Gastrocnemius medialis (tissue), 4 donors: ENCODE measurements at regions of chr18 and their contacts with region 1.

Region 1: GRCh38 chr18:12038639-12039417 is 54.8 kb upstream of the ANKRD62 start:
- DNase-seq: peak; percentile 57 to 74
- ATAC-seq: peak; percentile 85 to 87
- H3K4me3 ChIP-seq: peak overlapping the region; percentile 56 to 67 (median 60)
- H3K27ac ChIP-seq: peak overlapping the region in 2 of 4 donors; percentile 25 to 49
- H3K4me1 ChIP-seq: peaks cover 0 to 14% of the 10 kb centered on the region in 2 donors
- H3K27me3 ChIP-seq: no peaks in the 10 kb centered on the region
- CTCF ChIP-seq: peak; percentile 96 to 100 (median 97)
- POLR2A ChIP-seq: no peak

Region 2: DNA sequence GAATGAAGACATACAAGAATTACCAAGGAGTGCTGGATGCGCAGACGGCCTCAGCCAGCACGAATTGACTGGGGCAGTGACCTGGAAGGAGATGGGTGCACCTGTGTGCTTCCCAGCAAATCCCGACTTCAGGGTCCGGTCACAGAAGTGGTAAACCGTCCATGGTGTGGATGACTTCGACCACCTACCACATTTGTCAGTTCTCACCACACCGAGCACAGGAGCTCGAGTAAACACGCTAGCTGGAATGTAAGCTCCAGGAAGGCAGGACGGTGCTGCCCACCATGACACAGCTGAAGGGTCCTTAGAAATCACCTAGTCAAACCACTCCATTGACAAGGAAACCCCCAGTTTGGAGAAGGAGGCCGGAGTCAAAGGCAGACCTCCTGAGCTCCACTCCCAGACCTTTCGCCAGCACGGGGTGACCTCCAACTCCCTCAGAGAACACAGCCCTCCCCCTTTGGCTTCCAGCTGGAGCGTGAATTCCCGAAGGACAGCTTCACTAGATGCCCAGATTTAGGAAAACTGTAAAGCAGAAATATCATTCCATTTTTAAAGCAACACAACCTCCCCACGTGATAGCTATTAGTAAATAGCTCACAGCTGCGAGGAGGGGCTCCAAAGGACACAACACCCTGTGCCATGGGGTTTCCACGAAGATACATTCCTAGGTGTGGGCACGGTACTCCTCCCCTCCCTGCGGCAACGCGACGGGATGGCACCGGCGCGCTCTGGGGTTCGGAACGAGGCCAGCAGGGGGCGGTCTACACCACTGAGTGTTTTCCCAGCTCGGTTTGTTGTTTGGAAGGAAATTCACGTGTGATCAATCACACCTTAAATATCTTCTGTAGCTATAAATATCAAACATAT is 383.9 kb before region 1 on chr18:
- in situ Hi-C with region 1: no loop called
- intact Hi-C with region 1: loop called (anchors 10 kb)
- DNase-seq: peak in 1 of 2 donors; percentile 20
- ATAC-seq: no peak
- H3K4me3 ChIP-seq: peak overlapping the region in 1 of 4 donors; percentile 7
- H3K27ac ChIP-seq: no peak overlapping the region
- H3K4me1 ChIP-seq: peaks cover 0 to 4% of the 10 kb centered on the region in 2 donors
- H3K27me3 ChIP-seq: peaks cover 0 to 1% (median 0%) of the 10 kb centered on the region in 3 donors
- CTCF ChIP-seq: peak; percentile 40 to 71 (median 56)
- POLR2A ChIP-seq: no peak

Region 3: GRCh38 chr18:11733031-11733430 is 305.8 kb before region 1 on chr18:
- in situ Hi-C with region 1: loop called in 2 of 4 experiments (anchors 10 to 25 kb)
- intact Hi-C with region 1: loop called (anchors 10 kb)
- DNase-seq: peak; percentile 44 to 75
- ATAC-seq: peak; percentile 80 to 98
- H3K4me3 ChIP-seq: peak overlapping the region; percentile 0 to 48 (median 28)
- H3K27ac ChIP-seq: no peak overlapping the region
- H3K4me1 ChIP-seq: no peaks in the 10 kb centered on the region
- H3K27me3 ChIP-seq: peaks cover 0 to 5% (median 0%) of the 10 kb centered on the region in 3 donors
- CTCF ChIP-seq: peak; percentile 86 to 93 (median 90)
- POLR2A ChIP-seq: no peak

Region 4: DNA sequence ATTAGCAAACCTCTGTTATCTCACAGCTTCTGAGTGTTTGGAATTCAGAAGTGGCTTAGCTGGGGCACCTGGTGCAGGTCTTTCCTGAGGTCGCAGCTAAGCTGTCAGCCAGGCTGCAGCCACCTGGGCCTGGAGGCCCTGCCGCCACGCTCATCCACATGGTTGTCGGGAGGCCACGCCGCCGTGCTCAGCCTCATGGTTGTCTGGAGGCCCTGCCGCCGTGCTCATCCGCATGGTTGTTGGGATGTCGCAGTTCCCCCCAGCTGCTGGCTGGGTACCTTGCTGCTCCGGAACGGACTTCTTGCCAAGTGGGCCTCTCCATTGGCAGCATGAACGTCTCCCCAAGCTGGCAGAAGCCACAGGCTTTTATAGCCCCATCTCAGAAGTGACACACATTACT is 106.4 kb before region 1 on chr18:
- in situ Hi-C with region 1: loop called in 2 of 4 experiments (anchors 5 to 10 kb)
- intact Hi-C with region 1: no loop called
- DNase-seq: no peak
- ATAC-seq: no peak
- H3K4me3 ChIP-seq: no peak overlapping the region
- H3K27ac ChIP-seq: no peak overlapping the region
- H3K4me1 ChIP-seq: no peaks in the 10 kb centered on the region
- H3K27me3 ChIP-seq: no peaks in the 10 kb centered on the region
- CTCF ChIP-seq: no peak
- POLR2A ChIP-seq: no peak

Region 5: DNA sequence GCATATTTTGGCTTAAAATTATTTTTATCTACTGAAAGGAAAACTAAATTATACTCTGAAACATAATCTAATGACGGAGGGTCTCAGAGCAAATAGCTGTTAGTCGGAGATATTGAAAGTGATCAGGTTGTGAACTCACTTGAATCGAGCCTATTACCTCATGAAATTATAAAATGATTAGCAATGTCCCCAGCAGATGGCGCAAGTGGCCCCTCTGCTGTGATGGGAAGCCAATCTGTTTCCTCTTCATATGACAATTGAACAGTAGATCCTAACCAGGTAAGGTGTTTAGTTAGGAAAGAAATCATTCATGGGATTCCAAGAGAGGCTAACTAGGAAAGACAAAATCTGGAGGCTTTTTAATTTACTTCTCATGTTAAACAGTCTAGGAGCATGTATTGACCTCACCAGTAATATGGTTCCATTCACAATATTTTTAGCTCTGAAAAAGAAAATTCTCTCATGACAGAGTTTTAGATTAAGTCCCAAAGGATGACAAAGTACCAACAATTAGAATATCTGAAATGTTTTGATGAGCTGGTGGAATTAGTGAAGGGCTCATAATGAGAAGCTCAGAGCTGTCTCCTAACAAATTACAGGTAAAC is 100.9 kb before region 1 on chr18:
- in situ Hi-C with region 1: loop called in 2 of 4 experiments (anchors 5 to 10 kb)
- intact Hi-C with region 1: loop called (anchors 1 kb)
- DNase-seq: peak; percentile 45 to 67
- ATAC-seq: peak; percentile 87
- H3K4me3 ChIP-seq: no peak overlapping the region
- H3K27ac ChIP-seq: peak overlapping the region in 3 of 4 donors; percentile 41 to 44 (median 44)
- H3K4me1 ChIP-seq: peaks cover 0 to 2% of the 10 kb centered on the region in 2 donors
- H3K27me3 ChIP-seq: no peaks in the 10 kb centered on the region
- CTCF ChIP-seq: peak; percentile 80 to 90 (median 85)
- POLR2A ChIP-seq: no peak

Region 6: GRCh38 chr18:11980555-11981382 is 58.1 kb before region 1 on chr18:
- in situ Hi-C with region 1: no loop called
- intact Hi-C with region 1: loop called (anchors 1 kb)
- DNase-seq: peak; percentile 99
- ATAC-seq: peak; percentile 67 to 72
- H3K4me3 ChIP-seq: peak overlapping the region; percentile 71 to 94 (median 86)
- H3K27ac ChIP-seq: peak overlapping the region; percentile 97 to 100 (median 99)
- H3K4me1 ChIP-seq: peaks cover 21 to 38% of the 10 kb centered on the region in 2 donors
- H3K27me3 ChIP-seq: no peaks in the 10 kb centered on the region
- CTCF ChIP-seq: peak in 4 of 5 experiments; percentile 14 to 41 (median 21)
- POLR2A ChIP-seq: peak; percentile 98 to 99

Region 7: DNA sequence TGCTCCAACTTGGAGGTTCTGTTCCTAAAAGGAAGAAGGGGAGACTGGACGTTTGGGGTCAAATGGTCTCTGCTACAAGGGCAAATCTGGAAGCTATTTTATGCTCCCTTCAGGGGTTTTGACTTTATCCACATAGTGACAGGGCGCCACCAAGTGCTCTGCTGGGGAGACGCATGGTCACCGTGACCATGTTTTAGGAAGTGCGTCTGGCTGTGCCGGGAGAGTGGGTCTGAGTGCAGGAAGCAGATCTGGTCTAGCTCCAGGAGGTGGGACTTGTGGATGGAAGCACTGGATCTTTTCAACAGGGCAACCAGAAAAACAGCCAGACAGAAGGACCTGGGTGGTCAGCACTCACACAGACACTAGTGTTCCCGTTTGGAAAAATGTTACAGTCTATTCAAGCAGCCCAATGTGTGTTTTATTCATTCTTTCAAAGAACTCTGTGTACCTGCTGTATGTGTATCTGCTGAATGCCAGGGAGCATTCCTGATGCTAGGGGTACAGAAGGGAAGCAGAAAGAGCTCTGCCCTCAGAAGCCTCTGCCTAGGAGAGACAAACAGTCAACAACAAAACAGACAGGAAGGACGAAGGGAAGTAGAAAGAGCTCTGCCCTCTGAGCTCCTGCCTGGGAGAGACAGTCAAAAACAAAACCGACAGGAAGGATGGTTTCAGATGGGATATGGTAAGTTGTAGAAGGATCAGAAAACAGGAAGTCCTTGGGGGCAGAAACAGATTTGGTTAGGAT is 43.2 kb before region 1 on chr18:
- in situ Hi-C with region 1: no loop called
- intact Hi-C with region 1: loop called (anchors 1 kb)
- DNase-seq: peak; percentile 57 to 59
- ATAC-seq: peak; percentile 48 to 59
- H3K4me3 ChIP-seq: peak overlapping the region in 1 of 4 donors; percentile 21
- H3K27ac ChIP-seq: peak overlapping the region; percentile 83 to 100 (median 98)
- H3K4me1 ChIP-seq: peaks cover 65 to 78% of the 10 kb centered on the region in 2 donors
- H3K27me3 ChIP-seq: no peaks in the 10 kb centered on the region
- CTCF ChIP-seq: peak; percentile 64 to 88 (median 76)
- POLR2A ChIP-seq: no peak